ENCODE measurements at regions of chr14 and their contacts with region 1.

Region 1: GRCh38 chr14:75560962-75561432 is 17.4 kb upstream of the FLVCR2 start:
- DNase-seq: peak in 2 of 3 donors; percentile 37 to 51
- H3K4me3 ChIP-seq: no peak overlapping the region
- H3K27ac ChIP-seq: no peak overlapping the region
- H3K4me1 ChIP-seq: peaks cover 2 to 25% (median 18%) of the 10 kb centered on the region in 4 experiments
- H3K27me3 ChIP-seq: no peaks in the 10 kb centered on the region

Region 2: DNA sequence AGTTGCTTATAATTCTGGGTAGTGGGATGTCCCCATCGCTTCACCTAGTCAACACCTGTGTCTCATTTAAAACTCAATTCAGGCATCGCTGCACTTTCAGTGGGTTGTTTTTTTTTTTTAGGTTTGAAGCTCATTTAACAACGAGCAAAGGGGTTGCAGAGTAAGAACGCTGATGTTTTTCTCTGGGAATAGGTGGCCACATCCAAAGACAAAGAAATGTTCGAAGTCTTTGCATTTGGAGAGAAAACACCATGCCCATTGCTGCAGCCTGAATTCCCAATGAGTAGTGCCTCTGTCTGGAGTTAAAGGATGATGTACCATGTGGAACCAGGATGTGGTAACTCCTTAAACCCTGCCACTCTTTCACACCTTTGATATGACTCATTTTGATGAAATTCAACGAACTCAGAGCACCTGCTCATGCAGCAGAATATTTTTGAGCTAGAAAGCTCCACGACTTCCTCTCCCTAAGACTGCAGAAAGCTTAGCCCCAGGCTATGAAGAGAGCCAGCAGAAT is 73.8 kb before region 1 on chr14:
- CTCF ChIA-PET with region 1: interaction called, 36 read pairs
- POLR2A ChIA-PET with region 1: no interaction called
- DNase-seq: peak in 2 of 3 donors; percentile 27 to 39
- H3K4me3 ChIP-seq: no peak overlapping the region
- H3K27ac ChIP-seq: no peak overlapping the region
- H3K4me1 ChIP-seq: no peaks in the 10 kb centered on the region
- H3K27me3 ChIP-seq: no peaks in the 10 kb centered on the region

Region 3: GRCh38 chr14:75497191-75497590 is 63.8 kb before region 1 on chr14:
- CTCF ChIA-PET with region 1: interaction called, 11 read pairs
- POLR2A ChIA-PET with region 1: no interaction called
- DNase-seq: peak; percentile 68 to 93 (median 92)
- H3K4me3 ChIP-seq: peak overlapping the region in 2 of 7 experiments; percentile 2 to 7
- H3K27ac ChIP-seq: no peak overlapping the region
- H3K4me1 ChIP-seq: peaks cover 8 to 46% (median 34%) of the 10 kb centered on the region in 4 experiments
- H3K27me3 ChIP-seq: no peaks in the 10 kb centered on the region

Region 4: GRCh38 chr14:75514673-75515628 is 46.0 kb before region 1 on chr14:
- CTCF ChIA-PET with region 1: interaction called, 18 read pairs
- POLR2A ChIA-PET with region 1: no interaction called
- DNase-seq: peak; percentile 67 to 91 (median 89)
- H3K4me3 ChIP-seq: peak overlapping the region in 6 of 7 experiments; percentile 17 to 65 (median 50)
- H3K27ac ChIP-seq: peak overlapping the region in 1 of 2 experiments; percentile 36
- H3K4me1 ChIP-seq: peaks cover 10 to 27% (median 19%) of the 10 kb centered on the region in 4 experiments
- H3K27me3 ChIP-seq: no peaks in the 10 kb centered on the region

Region 5: GRCh38 chr14:75542588-75543091 is 18.4 kb before region 1 on chr14:
- CTCF ChIA-PET with region 1: interaction called, 17 read pairs
- POLR2A ChIA-PET with region 1: no interaction called
- DNase-seq: peak; percentile 87 to 97 (median 96)
- H3K4me3 ChIP-seq: peak overlapping the region in 6 of 7 experiments; percentile 9 to 69 (median 50)
- H3K27ac ChIP-seq: peak overlapping the region; percentile 56 to 85
- H3K4me1 ChIP-seq: peaks cover 0 to 45% (median 32%) of the 10 kb centered on the region in 4 experiments
- H3K27me3 ChIP-seq: no peaks in the 10 kb centered on the region

Region 6: GRCh38 chr14:75577729-75578101 is 16.7 kb after region 1 on chr14:
- CTCF ChIA-PET with region 1: interaction called, 66 read pairs
- POLR2A ChIA-PET with region 1: interaction called, 4 read pairs
- DNase-seq: peak; percentile 74 to 82 (median 81)
- H3K4me3 ChIP-seq: peak overlapping the region; percentile 48 to 86 (median 74)
- H3K27ac ChIP-seq: no peak overlapping the region
- H3K4me1 ChIP-seq: peaks cover 0 to 15% (median 14%) of the 10 kb centered on the region in 4 experiments
- H3K27me3 ChIP-seq: peaks cover 0 to 3% (median 0%) of the 10 kb centered on the region in 5 experiments

Region 7: DNA sequence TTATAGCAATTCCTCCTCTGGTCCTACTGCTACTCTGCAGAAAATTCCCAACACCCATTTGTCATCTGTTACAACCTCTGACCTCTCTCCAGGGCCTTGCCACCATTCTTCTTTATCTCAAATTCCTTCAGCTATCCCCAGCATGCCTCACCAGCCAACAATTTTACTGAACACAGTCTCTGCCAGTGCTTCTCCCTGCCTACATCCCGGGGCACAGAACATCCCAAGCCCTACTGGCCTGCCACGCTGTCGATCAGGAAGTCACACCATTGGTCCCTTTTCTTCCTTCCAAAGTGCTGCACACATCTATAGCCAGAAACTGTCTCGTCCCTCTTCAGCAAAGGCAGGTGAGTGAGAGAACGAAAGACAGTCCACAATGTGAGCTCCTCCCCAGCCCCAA is 222.2 kb after region 1 on chr14:
- CTCF ChIA-PET with region 1: no interaction called
- POLR2A ChIA-PET with region 1: no interaction called
- DNase-seq: no peak
- H3K4me3 ChIP-seq: no peak overlapping the region
- H3K27ac ChIP-seq: no peak overlapping the region
- H3K4me1 ChIP-seq: peaks cover 0 to 4% (median 2%) of the 10 kb centered on the region in 4 experiments
- H3K27me3 ChIP-seq: no peaks in the 10 kb centered on the region

Measured in common myeloid progenitor, CD34-positive (primary cell).